ENCODE measurements at regions of chr15 and their contacts with region 1.

Region 1: GRCh38 chr15:66287461-66288057 is 5.8 kb upstream of the DIS3L start:
- DNase-seq: no peak
- H3K4me3 ChIP-seq: no peak overlapping the region
- H3K27ac ChIP-seq: no peak overlapping the region
- H3K4me1 ChIP-seq: peaks cover 3% of the 10 kb centered on the region
- H3K27me3 ChIP-seq: no peaks in the 10 kb centered on the region
- CTCF ChIP-seq: peak in 2 of 3 experiments; percentile 32 to 62
- POLR2A ChIP-seq: no peak

Region 2: GRCh38 chr15:65980824-65981456 is 306.6 kb before region 1 on chr15:
- intact Hi-C with region 1: loop called (anchors 10 kb)
- DNase-seq: peak; percentile 81
- H3K4me3 ChIP-seq: no peak overlapping the region
- H3K27ac ChIP-seq: no peak overlapping the region
- H3K4me1 ChIP-seq: peaks cover 15% of the 10 kb centered on the region
- H3K27me3 ChIP-seq: no peaks in the 10 kb centered on the region
- CTCF ChIP-seq: peak; percentile 37 to 77 (median 74)
- POLR2A ChIP-seq: no peak

Region 3: GRCh38 chr15:66356345-66357236 is 69.0 kb after region 1 on chr15 and contains the start of gene TIPIN:
- intact Hi-C with region 1: no loop called
- DNase-seq: peak; percentile 97
- H3K4me3 ChIP-seq: peak within 1 kb of the TSS; percentile 59 to 72
- H3K27ac ChIP-seq: peak within 1 kb of the TSS; percentile 52 to 68
- H3K4me1 ChIP-seq: no peaks in the 10 kb centered on the region
- H3K27me3 ChIP-seq: no peaks in the 10 kb centered on the region
- CTCF ChIP-seq: no peak
- POLR2A ChIP-seq: no peak
- total RNA-seq, gene TIPIN: 20.7 to 36.8 TPM

Measured in testis (tissue), 5 donors.